HepG2 (cell line): ENCODE measurements at regions of chr5 and their contacts with region 1.

Region 1: DNA sequence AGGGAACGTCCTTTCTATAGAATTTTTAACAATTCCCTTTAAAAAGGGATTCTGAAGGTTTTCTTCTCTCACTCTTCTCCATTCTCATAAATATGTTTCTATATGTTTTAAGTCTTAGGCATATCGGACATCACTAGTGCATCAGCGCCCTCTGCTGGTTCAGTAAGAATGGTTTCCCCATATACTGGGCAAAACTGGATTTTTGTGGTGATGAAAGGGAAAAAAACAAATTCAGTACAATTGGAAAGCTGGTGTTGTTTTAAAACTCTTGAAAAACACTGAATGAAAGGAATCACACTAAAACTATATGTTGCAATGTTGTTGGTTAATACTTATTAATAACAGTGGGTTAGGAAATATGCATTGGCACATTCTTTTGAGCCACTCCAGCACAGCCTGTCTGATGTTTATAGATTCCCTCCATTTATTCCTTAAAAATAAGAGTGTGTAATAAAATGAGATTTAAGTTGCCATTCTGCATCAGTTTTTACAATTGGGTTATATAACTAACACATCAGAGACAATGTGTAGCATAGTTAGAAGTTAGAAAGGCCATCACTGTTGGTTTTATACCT is 15.8 kb downstream of the CWC27 start:
- DNase-seq: peak; percentile 71
- ATAC-seq: peak; percentile 77
- H3K4me3 ChIP-seq: no peak overlapping the region
- H3K27ac ChIP-seq: no peak overlapping the region
- H3K4me1 ChIP-seq: no peaks in the 10 kb centered on the region
- H3K27me3 ChIP-seq: no peaks in the 10 kb centered on the region
- CTCF ChIP-seq: peak; percentile 82
- EP300 ChIP-seq: no peak
- POLR2A ChIP-seq: no peak
- RAD21 ChIP-seq: peak; percentile 17; the same call in 1 of the 2 replicates

Region 2: GRCh38 chr5:64384761-64385160 is 399.8 kb before region 1 on chr5:
- CTCF ChIA-PET with region 1: no interaction called
- POLR2A ChIA-PET with region 1: no interaction called
- in situ Hi-C with region 1: no loop called
- intact Hi-C with region 1: loop called (anchors 1 kb)
- DNase-seq: peak; percentile 12
- ATAC-seq: peak; percentile 93
- H3K4me3 ChIP-seq: no peak overlapping the region
- H3K27ac ChIP-seq: no peak overlapping the region
- H3K4me1 ChIP-seq: no peaks in the 10 kb centered on the region
- H3K27me3 ChIP-seq: no peaks in the 10 kb centered on the region
- CTCF ChIP-seq: peak; percentile 57
- EP300 ChIP-seq: no peak
- POLR2A ChIP-seq: no peak
- RAD21 ChIP-seq: no peak